ENCODE measurements at regions of chr4 and their contacts with region 1.

Region 1: DNA sequence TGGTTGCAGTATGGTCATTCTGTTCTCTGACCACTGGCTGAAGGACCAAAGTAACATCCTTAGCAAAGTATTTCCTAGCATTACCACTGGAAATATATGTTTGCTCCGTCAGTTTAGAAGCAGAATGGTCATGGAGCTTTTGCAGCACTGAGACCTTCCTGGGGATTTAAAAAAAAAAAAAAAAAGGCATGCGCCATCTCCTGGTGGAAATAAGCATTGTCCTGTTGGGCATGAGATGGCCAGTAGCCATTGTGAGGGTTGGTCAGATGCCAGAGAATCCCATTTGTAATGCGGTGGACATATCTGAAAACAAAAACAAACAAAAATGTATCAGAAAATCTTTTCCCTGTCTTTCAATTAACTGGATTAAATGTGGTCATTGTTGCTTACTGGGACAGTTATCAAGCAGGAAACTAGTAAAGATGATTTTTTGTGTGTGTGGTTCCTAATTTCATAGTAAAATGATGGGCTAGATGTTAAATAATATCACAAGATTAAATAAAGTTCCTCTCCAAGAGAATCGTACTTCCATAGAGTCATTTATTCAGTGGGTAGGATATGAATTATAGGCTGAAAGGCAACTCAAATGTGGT is 139.6 kb downstream of the SOWAHB start:
- DNase-seq: no peak
- ATAC-seq: peak; percentile 39
- H3K4me3 ChIP-seq: no peak overlapping the region
- H3K4me3 Mint-ChIP-seq: no peak overlapping the region
- H3K27ac ChIP-seq: no peak overlapping the region
- H3K27ac Mint-ChIP-seq: no peak overlapping the region
- H3K4me1 ChIP-seq: no peaks in the 10 kb centered on the region
- H3K4me1 Mint-ChIP-seq: peaks cover 0 to 4% (median 0%) of the 10 kb centered on the region in 7 donors
- H3K27me3 ChIP-seq: no peaks in the 10 kb centered on the region
- H3K27me3 Mint-ChIP-seq: peaks cover 0 to 13% (median 7%) of the 10 kb centered on the region in 5 donors

Region 2: DNA sequence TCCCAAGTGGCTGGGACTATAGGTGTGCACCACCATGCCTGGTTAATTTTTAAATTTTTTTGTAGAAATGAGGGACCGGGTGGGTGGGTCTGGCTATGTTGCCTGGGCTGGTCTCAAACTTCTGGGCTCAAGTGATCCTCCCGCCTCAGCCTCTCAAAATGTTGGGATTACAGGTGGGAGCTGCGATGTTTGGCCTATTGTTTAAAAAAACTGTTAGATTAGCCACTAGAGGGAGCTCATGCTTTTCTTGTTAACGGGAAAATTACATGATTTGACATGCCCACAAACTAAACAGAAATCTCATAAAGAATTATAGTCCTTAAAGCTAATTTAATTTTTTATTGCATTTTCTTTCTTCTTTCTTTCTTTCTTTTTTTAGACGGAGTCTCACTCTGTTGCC is 762.7 kb before region 1 on chr4:
- CTCF ChIA-PET with region 1: no interaction called
- POLR2A ChIA-PET with region 1: no interaction called
- intact Hi-C with region 1: loop called in 1 of 2 experiments (anchors 2 kb)
- DNase-seq: peak in 7 of 9 donors; percentile 13 to 62 (median 43)
- ATAC-seq: peak; percentile 39
- H3K4me3 ChIP-seq: no peak overlapping the region
- H3K4me3 Mint-ChIP-seq: no peak overlapping the region
- H3K27ac ChIP-seq: no peak overlapping the region
- H3K27ac Mint-ChIP-seq: no peak overlapping the region
- H3K4me1 ChIP-seq: no peaks in the 10 kb centered on the region
- H3K4me1 Mint-ChIP-seq: peaks cover 0 to 10% (median 5%) of the 10 kb centered on the region in 7 donors
- H3K27me3 ChIP-seq: no peaks in the 10 kb centered on the region
- H3K27me3 Mint-ChIP-seq: peaks cover 0 to 10% (median 2%) of the 10 kb centered on the region in 5 donors

Region 3: DNA sequence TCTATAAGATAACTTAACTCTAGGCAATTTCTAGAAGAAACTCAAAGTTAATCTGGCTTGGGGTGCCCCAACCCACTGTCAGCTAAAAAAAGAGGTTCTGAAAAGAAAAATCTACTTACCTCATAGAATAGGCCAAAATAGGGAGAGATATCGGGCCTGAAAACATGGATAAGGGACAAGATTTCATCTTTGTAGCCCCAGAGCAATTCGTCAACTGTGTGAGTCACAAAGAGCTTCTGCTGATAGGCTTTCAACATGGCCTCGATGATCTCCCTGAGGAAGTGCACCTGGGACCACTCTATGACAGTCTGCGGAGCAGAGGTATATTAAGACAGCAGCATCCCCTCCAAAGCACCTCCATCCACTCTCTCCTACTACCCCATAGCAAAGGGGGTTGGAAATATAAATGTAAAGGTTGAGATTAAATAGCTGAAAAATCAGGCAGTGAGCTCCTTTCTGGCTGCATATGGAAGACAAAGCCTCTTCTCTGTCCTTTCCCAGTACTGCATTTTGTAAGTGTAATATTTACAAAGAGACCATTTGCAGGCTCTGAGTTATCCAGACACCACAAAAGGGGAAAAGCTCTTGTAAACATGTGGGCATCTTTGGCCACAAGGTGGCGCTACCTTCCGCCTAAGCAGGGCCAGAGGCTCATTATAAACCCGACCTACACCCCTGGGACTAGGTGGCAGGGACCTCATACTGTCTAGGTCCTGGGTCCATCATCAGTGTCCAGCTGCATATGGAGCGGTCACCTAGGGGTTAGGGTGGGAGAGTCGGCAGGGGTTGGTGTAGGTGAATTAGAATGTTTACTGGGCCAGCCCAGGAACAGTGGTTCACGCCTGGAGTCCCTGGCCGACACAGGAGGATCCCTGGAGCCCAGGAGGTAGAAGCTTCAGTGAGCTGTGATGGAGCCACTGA is 578.7 kb before region 1 on chr4:
- CTCF ChIA-PET with region 1: no interaction called
- POLR2A ChIA-PET with region 1: no interaction called
- intact Hi-C with region 1: loop called in 1 of 2 experiments (anchors 5 kb)
- DNase-seq: peak; percentile 63 to 82 (median 72)
- ATAC-seq: peak; percentile 95
- H3K4me3 ChIP-seq: no peak overlapping the region
- H3K4me3 Mint-ChIP-seq: no peak overlapping the region
- H3K27ac ChIP-seq: no peak overlapping the region
- H3K27ac Mint-ChIP-seq: peak overlapping the region in 2 of 9 donors; percentile 27 to 53
- H3K4me1 ChIP-seq: no peaks in the 10 kb centered on the region
- H3K4me1 Mint-ChIP-seq: peaks cover 0 to 3% (median 0%) of the 10 kb centered on the region in 7 donors
- H3K27me3 ChIP-seq: no peaks in the 10 kb centered on the region
- H3K27me3 Mint-ChIP-seq: no peaks in the 10 kb centered on the region

Region 4: DNA sequence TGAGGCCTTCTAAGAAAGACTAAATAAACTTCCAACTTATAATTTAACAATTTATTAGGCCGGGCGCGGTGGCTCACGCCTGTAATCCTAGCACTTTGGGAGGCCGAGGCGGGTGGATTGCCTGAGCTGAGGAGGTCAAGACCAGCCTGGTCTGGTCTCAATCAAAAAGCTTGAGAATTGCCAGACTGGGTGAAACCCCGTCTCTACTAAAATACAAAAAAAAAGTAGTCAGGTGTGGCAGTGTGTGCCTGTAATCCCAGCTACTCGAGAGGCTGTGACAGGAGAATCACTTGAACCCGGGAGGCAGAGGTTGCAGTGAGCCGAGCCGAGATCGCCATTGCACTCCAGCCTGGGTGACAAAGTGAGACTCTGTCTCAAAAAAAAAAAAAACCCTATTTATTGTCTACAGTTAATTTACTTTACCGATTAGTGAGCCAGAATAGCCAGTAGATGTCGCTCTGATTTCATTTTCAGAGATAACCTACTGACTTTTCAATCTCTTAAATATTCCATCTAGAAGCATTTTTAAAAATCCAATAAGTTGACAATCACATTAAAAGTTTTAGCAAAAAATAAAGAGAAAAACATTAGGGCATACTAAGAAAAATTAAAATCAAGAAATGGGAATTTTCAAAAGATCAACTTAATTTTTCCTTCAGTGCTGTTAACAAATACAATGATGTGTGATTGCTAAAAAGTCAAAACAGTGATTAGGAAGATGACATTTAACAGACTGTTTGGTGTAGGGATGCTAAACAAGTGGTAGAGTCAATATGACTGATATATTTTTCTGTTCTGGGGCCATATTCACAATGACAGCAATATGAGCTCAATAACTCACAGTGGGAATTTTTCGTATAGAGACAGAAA is 327.6 kb before region 1 on chr4:
- CTCF ChIA-PET with region 1: interaction called, 4 read pairs
- POLR2A ChIA-PET with region 1: no interaction called
- intact Hi-C with region 1: loop called (anchors 2 to 5 kb)
- DNase-seq: peak in 3 of 9 donors; percentile 17 to 32 (median 18)
- ATAC-seq: no peak
- H3K4me3 ChIP-seq: no peak overlapping the region
- H3K4me3 Mint-ChIP-seq: no peak overlapping the region
- H3K27ac ChIP-seq: no peak overlapping the region
- H3K27ac Mint-ChIP-seq: no peak overlapping the region
- H3K4me1 ChIP-seq: no peaks in the 10 kb centered on the region
- H3K4me1 Mint-ChIP-seq: peaks cover 0 to 4% (median 0%) of the 10 kb centered on the region in 7 donors
- H3K27me3 ChIP-seq: no peaks in the 10 kb centered on the region
- H3K27me3 Mint-ChIP-seq: peaks cover 20 to 37% (median 22%) of the 10 kb centered on the region in 5 donors